Posterior vena cava (tissue), 2 donors: ENCODE measurements at regions of chr2 and their contacts with region 1.

Region 1: DNA sequence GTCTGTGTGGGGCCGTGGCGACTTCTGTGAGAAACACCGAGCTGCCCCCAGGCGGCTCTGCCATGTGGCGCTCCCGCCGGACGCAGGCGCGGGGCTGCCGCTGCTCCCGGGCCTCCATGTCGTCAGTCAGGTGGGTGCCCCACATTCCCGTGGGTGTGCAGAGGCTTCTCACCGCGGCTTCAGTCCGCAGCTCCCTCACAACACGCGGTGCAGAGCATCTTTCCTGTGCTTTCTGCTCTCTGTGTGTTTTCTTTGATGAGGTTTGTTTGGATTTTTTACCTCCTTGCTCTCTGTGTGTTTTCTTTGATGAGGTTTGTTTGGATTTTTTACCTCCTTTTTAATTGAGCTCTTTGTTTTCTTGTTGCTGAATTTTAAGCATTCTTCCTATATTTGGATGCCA is 13.0 kb downstream of the AQP12A start:
- DNase-seq: no peak

Region 2: DNA sequence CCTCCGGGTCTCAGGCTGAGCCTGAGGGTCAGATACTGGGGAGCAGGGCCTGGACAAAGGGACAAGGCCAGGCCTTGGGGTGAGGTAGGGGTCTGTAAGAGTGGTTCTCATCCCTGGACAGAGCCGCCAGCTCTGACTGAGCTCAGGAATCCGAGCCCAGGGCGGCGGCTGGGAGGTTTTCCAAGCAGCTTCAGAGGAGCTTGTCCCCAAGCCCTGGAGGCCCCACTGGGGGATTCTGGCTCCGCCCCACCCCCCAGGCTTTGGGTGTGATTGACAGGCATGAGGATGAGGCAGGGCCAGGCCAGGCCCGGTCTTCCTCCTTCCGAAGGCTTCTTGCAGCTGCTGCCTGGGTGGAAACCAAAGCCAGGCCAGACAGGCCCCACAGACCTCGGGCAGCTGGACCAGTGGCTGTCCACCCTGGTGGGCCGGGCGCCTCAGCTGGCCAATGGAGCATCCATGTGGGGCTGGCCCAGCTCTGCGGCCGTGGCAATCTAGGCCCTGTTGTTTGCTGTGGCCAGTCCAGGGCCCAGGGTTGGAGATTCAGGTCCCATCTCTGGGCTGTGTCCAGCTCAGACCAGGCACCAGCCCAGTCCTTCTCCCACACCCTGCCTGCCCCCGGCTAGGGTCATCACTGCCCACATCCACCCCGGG is 292.3 kb before region 1 on chr2:
- intact Hi-C with region 1: no loop called
- DNase-seq: peak; percentile 73

Region 3: DNA sequence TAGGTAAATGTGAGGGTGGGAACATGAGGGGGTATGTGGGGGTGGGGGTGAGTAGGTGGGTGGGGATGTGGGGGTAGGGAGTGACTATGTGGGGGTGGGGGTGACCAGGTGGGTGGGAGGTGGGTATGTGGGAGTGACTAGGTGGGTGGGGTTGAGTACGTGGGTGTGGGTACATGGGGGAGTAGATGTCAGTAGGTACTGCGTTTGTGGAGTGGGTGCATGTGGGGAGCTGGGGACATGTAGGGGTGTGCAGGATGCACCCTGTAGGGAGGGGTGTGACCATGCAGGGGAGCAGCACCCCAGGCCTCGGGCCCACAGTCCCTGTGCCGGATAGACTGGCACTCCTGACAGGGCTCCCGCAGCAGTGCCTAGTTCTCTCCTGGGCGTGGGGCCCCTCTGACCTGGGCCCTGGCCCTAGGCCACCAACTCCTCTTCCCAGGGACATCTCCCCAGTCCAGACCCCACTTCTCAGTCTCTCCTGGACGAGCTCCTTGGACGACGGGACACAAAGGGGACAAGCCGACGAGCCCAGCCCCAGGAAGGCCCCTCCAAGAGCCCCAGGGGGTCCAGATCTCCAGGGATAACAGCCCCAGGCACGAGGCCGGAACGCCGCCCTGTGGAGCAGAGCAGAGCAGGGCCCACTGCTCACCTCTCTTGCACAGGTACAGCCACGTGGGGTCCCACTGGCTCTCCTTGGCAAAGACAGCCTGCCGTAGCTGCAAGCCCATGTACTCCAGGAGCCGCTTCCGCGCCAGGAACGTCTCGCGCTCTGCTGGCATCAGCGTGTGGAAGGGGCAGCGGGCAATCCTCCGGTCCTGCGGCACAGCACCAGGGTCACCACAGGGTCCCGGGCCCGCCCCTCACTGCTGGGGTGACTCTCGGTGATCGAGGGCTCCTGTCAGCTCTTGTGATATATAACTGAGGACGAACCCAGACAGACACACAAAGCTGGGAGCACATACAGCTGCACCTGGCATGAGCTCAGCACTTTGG is 205.0 kb before region 1 on chr2:
- intact Hi-C with region 1: no loop called
- DNase-seq: peak; percentile 79

Region 4: GRCh38 chr2:240513549-240514287 is 190.9 kb before region 1 on chr2:
- intact Hi-C with region 1: loop called in 1 of 2 experiments (anchors 10 kb)
- DNase-seq: peak; percentile 96

Region 5: DNA sequence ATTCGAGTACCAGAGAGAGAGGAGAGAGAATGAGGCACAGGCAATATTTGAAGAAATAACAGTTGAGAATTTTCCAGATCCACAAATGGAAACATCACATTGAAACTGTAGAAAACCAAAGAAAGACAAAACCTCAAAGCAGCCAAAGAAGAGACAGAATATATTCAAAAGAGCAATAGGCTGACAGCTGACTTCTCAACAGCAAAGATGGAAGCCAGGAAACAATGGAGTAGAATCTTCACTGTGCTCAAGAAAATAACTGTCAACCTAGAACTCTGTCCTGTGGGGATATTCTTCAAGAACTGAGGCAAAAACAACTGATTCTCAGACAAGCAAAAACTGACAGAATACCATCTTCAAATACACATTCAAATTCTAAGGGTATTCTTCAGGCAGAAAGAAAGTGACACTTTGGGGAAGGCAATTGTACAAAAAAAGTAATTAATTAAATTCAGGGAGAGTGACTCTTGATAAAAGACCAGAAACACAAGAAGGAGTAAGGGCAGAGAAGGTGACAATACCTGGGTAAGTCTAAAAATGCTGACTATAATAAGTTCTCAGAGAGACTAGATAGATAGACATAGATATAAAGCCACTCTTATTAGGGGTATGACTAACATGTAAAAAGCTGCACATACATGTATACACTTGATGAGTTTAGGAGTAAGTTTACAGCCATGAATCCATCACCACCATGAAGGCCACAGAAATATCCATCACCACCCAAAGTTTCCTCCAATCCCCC is 172.4 kb before region 1 on chr2:
- intact Hi-C with region 1: loop called in 1 of 2 experiments (anchors 5 kb)
- DNase-seq: no peak